ENCODE measurements at regions of chr12 and their contacts with region 1.

Region 1: GRCh38 chr12:71400481-71400880 is 39.1 kb upstream of the LGR5 start:
- DNase-seq: no peak
- H3K4me3 ChIP-seq: no peak overlapping the region
- H3K27ac ChIP-seq: no peak overlapping the region
- H3K4me1 ChIP-seq: no peaks in the 10 kb centered on the region
- H3K27me3 ChIP-seq: no peaks in the 10 kb centered on the region
- CTCF ChIP-seq: no peak
- POLR2A ChIP-seq: no peak

Region 2: DNA sequence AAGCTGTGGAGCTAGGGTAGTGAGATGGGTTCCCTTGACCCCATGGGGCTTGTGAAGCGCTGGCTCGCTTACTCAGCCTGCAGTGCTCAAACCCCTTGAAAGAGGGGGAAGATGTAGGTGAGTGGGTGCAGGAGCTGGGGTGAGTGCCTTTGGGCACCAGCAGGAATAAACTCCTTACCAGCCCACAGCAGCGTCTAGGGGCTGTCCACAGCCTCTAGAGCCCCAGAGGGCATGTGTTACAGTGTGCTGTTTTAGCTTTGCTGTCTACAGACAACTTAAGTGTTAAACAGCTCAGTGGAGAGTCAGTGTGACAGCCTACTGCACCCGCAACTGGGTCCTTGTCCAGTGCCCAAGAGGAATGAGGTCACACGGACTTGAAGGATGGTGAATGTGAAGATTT is 290.6 kb before region 1 on chr12:
- intact Hi-C with region 1: loop called (anchors 5 kb)
- DNase-seq: no peak
- H3K4me3 ChIP-seq: no peak overlapping the region
- H3K27ac ChIP-seq: no peak overlapping the region
- H3K4me1 ChIP-seq: no peaks in the 10 kb centered on the region
- H3K27me3 ChIP-seq: no peaks in the 10 kb centered on the region
- CTCF ChIP-seq: no peak
- POLR2A ChIP-seq: no peak

Measured in breast epithelium (tissue), 4 donors.